ENCODE measurements at regions of chr6 and their contacts with region 1.

Region 1: DNA sequence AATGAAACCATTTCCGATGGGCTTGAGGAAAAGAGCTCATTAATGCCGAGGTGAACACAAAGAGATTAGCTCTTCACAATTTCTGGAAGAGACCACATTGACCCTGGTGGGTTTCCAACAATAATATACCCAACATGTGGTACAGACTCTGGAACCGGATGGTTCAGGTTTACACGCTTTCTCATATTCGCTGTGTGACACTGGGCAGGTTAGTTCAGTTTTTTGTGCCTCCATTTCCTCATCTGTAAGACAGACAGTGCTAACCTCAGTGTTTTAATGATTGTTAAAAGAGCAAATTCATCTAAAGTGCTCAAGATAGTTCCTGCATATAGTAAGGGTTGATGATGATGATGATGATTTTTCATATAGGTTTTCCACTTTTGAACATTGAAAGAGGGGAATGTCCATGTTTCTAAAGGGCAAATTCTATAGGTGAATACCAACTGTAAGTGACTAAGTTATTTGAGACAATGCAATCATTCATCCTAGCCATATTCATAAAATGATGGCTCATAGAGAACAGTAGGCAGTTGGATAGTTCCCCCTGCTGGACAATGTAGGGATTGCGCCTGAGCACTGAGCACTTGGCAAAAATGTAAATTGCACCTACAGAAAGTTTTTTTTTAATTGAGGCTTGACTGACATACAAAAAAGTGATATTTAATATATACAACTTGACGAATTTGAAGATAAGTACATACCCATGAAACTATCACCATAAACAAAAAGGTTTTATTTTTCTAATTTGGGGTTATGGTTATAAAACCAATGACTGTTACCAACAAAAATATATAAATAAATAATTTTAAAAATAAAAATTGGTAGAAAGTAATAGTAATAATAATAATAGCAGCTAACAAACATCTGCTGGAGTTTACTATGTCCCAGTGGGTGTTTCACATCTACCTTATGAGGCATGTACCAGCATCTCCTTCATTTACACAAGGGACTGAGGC is 2.1 kb upstream of the PERP start:
- DNase-seq: peak; percentile 50
- ATAC-seq: peak; percentile 73
- H3K4me3 Mint-ChIP-seq: peak overlapping the region; percentile 39
- H3K27ac Mint-ChIP-seq: no peak overlapping the region
- H3K4me1 Mint-ChIP-seq: peaks cover 17% of the 10 kb centered on the region
- H3K27me3 Mint-ChIP-seq: peaks cover 28% of the 10 kb centered on the region
- CTCF ChIP-seq: peak; percentile 93

Region 2: DNA sequence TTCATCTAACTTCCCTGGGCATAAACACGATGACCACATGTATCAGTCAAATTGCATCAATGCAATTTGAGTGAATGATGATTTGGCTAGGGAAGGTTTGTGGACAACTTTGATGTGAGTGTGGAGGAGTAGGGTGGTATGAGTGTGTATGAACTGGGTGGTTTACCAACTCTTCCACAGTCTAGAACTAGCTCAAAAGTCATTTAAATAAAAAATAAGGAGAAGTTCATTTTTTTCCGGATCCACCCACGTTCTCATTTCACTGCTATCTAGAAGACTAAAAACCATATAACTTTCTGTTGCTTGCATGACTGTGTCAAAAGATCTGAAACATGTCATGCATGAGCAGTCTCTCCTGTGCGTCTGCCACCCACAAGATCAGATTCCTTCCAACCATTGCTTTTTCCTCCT is 1163.6 kb before region 1 on chr6:
- CTCF ChIA-PET with region 1: no interaction called
- POLR2A ChIA-PET with region 1: no interaction called
- intact Hi-C with region 1: no loop called
- DNase-seq: no peak
- ATAC-seq: no peak
- H3K4me3 Mint-ChIP-seq: no peak overlapping the region
- H3K27ac Mint-ChIP-seq: no peak overlapping the region
- H3K4me1 Mint-ChIP-seq: no peaks in the 10 kb centered on the region
- H3K27me3 Mint-ChIP-seq: peaks cover 9% of the 10 kb centered on the region
- CTCF ChIP-seq: no peak

Region 3: GRCh38 chr6:136967876-136968752 is 1141.2 kb before region 1 on chr6:
- CTCF ChIA-PET with region 1: no interaction called
- POLR2A ChIA-PET with region 1: no interaction called
- intact Hi-C with region 1: loop called (anchors 5 kb)
- DNase-seq: peak; percentile 39
- ATAC-seq: peak; percentile 93
- H3K4me3 Mint-ChIP-seq: no peak overlapping the region
- H3K27ac Mint-ChIP-seq: no peak overlapping the region
- H3K4me1 Mint-ChIP-seq: peaks cover 4% of the 10 kb centered on the region
- H3K27me3 Mint-ChIP-seq: peaks cover 12% of the 10 kb centered on the region
- CTCF ChIP-seq: peak; percentile 22

Region 4: DNA sequence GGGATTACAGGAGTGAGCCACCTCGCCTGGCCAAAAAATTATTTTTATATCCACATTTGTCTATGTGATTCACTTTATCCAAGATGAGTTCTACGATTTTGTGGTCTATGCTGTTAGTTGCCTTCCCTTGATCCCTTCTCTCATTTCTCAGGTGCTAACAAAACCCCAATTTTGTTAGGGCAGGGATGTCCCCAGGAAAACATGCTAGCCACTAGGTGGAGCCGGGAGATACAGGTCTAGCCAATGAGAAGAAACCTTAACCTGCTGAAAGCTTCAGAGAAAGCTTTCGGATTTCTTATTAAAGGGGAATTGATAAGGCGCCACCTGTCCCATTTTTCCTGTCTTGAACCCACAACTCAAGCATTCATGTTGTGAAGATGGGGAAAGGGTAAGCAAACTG is 447.7 kb before region 1 on chr6:
- CTCF ChIA-PET with region 1: interaction called, 9 read pairs
- POLR2A ChIA-PET with region 1: no interaction called
- intact Hi-C with region 1: loop called (anchors 1 kb)
- DNase-seq: no peak
- ATAC-seq: peak; percentile 56
- H3K4me3 Mint-ChIP-seq: no peak overlapping the region
- H3K27ac Mint-ChIP-seq: no peak overlapping the region
- H3K4me1 Mint-ChIP-seq: no peaks in the 10 kb centered on the region
- H3K27me3 Mint-ChIP-seq: peaks cover 7% of the 10 kb centered on the region
- CTCF ChIP-seq: no peak

Region 5: GRCh38 chr6:137799950-137800568 is 309.3 kb before region 1 on chr6:
- CTCF ChIA-PET with region 1: interaction called, 3 read pairs
- POLR2A ChIA-PET with region 1: no interaction called
- intact Hi-C with region 1: loop called (anchors 5 kb)
- DNase-seq: no peak
- ATAC-seq: peak; percentile 91
- H3K4me3 Mint-ChIP-seq: no peak overlapping the region
- H3K27ac Mint-ChIP-seq: peak overlapping the region; percentile 65
- H3K4me1 Mint-ChIP-seq: peaks cover 29% of the 10 kb centered on the region
- H3K27me3 Mint-ChIP-seq: no peaks in the 10 kb centered on the region
- CTCF ChIP-seq: no peak

Region 6: DNA sequence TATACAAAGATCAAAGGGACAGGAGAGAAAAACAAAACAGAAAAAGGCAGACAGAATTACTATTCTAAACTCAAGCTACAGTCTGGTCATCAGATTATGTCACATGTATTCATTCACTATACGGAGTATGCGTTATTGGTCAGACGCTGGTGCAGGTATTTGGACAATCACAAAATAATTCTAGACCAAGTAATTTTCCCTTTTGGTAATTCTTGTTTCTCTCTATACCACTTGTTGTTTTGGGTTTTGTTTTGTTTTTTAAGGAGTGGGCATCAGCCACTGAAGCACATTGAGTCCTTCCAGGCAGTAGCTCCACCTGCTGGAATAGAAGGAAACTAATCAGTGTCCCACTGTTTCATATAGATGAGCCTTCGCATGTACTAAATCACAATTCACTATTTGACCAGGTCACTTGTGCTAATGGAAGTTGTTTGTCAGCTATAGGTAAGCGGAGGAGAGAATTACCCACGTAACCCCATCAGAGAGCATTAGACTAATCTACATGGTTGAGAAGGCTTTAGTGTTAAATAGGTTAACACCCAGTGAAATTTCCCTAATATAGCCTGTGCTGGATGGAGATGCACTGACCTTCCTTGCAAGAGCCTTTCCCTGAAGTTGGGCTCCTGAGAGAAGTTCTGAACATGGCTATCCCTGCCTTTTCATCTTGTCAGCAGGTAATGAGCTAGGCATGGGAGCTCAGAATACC is 164.4 kb before region 1 on chr6:
- CTCF ChIA-PET with region 1: no interaction called
- POLR2A ChIA-PET with region 1: no interaction called
- intact Hi-C with region 1: loop called (anchors 5 kb)
- DNase-seq: no peak
- ATAC-seq: peak; percentile 73
- H3K4me3 Mint-ChIP-seq: peak overlapping the region; percentile 17
- H3K27ac Mint-ChIP-seq: peak overlapping the region; percentile 27
- H3K4me1 Mint-ChIP-seq: peaks cover 30% of the 10 kb centered on the region
- H3K27me3 Mint-ChIP-seq: no peaks in the 10 kb centered on the region
- CTCF ChIP-seq: no peak

Region 7: DNA sequence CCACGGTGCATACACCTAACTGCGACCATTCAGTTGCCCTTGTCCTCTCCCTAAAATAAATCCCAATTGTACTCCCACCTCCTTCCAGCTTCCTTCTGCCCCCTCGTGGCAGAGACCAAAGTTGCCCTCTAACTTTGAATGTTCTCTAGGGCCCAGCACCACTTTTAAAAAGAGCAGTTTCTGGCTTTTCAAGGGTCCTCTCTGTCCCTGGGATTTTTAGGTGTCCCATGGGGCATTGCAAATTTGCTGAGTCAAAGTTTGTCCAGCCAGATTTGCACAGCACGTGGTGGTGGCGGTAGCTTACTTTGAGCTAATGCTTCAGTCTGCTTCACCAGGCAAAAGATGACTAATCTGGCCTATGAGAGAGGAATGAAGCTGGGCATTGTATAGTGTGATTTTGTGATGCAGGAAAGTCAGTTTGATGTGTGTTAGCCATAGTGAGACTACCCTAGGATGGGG is 102.3 kb before region 1 on chr6:
- CTCF ChIA-PET with region 1: interaction called, 17 read pairs
- POLR2A ChIA-PET with region 1: no interaction called
- intact Hi-C with region 1: no loop called
- DNase-seq: no peak
- ATAC-seq: no peak
- H3K4me3 Mint-ChIP-seq: no peak overlapping the region
- H3K27ac Mint-ChIP-seq: no peak overlapping the region
- H3K4me1 Mint-ChIP-seq: peaks cover under 1% of the 10 kb centered on the region
- H3K27me3 Mint-ChIP-seq: peaks cover 5% of the 10 kb centered on the region
- CTCF ChIP-seq: no peak

Region 8: DNA sequence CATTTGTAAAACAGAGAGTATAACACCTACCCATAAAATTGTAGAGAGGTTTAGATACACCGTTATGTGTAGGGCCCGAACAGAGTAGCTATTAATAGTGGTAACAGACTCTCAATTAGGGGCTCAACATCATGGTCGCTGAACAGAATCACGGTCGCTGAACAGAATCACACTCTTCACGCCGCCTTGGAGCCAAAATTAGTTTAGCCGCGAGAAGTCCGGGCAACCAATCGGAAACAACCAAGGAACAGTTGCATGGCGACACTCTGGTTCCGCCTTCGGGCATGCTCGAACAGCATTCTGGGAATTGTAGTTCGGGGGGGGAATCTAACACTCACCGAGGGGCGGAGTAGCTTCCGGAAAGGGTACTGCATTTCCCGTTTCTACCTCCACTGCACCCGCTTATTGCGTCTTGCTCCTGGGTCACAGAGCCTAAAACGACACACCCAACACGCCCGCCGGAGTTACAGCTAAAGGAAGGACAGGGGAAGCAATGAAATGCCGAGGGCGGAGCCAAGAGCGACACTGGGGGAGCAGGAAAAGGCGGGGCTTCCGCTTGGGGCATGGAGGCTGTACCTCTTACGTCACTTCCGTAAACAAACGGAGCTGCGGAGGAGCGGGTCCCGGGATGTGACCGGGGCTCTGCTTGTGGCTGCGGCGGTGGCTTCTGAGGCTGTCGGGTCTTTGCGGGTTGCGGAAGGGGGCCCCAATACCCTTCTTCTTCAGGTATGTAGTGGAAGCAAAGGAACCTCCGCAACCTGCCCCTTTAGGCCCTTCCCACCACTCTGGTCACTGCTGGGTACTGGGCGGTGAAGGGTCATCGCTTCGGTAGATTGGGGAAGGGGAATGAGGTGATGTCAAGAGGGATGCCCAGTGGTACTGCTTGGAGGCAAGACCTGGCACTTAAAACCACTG is 664.1 kb after region 1 on chr6 and contains the start of gene CCDC28A:
- CTCF ChIA-PET with region 1: no interaction called
- POLR2A ChIA-PET with region 1: no interaction called
- intact Hi-C with region 1: loop called (anchors 5 kb)
- DNase-seq: peak; percentile 90
- ATAC-seq: peak; percentile 85
- H3K4me3 Mint-ChIP-seq: peak within 1 kb of the TSS; percentile 100
- H3K27ac Mint-ChIP-seq: peak within 1 kb of the TSS; percentile 100
- H3K4me1 Mint-ChIP-seq: peaks cover 28% of the 10 kb centered on the region
- H3K27me3 Mint-ChIP-seq: no peaks in the 10 kb centered on the region
- CTCF ChIP-seq: no peak
- total RNA-seq, gene CCDC28A: 14.0 and 14.6 TPM in 2 replicates

Region 9: GRCh38 chr6:139996253-139996834 is 1887.0 kb after region 1 on chr6:
- CTCF ChIA-PET with region 1: no interaction called
- POLR2A ChIA-PET with region 1: no interaction called
- intact Hi-C with region 1: no loop called
- DNase-seq: no peak
- ATAC-seq: peak; percentile 42
- H3K4me3 Mint-ChIP-seq: no peak overlapping the region
- H3K27ac Mint-ChIP-seq: no peak overlapping the region
- H3K4me1 Mint-ChIP-seq: no peaks in the 10 kb centered on the region
- H3K27me3 Mint-ChIP-seq: no peaks in the 10 kb centered on the region
- CTCF ChIP-seq: no peak